Right cardiac atrium (tissue), 5 donors: ENCODE measurements at regions of chr9 and their contacts with region 1.

Region 1: GRCh38 chr9:108761655-108762347 is 94.0 kb downstream of the ACTL7B start:
- DNase-seq: peak; percentile 63 to 74 (median 68)
- ATAC-seq: peak; percentile 84 to 90
- H3K4me3 ChIP-seq: no peak overlapping the region
- H3K27ac ChIP-seq: no peak overlapping the region
- H3K4me1 ChIP-seq: no peaks in the 10 kb centered on the region
- H3K27me3 ChIP-seq: no peaks in the 10 kb centered on the region

Region 2: DNA sequence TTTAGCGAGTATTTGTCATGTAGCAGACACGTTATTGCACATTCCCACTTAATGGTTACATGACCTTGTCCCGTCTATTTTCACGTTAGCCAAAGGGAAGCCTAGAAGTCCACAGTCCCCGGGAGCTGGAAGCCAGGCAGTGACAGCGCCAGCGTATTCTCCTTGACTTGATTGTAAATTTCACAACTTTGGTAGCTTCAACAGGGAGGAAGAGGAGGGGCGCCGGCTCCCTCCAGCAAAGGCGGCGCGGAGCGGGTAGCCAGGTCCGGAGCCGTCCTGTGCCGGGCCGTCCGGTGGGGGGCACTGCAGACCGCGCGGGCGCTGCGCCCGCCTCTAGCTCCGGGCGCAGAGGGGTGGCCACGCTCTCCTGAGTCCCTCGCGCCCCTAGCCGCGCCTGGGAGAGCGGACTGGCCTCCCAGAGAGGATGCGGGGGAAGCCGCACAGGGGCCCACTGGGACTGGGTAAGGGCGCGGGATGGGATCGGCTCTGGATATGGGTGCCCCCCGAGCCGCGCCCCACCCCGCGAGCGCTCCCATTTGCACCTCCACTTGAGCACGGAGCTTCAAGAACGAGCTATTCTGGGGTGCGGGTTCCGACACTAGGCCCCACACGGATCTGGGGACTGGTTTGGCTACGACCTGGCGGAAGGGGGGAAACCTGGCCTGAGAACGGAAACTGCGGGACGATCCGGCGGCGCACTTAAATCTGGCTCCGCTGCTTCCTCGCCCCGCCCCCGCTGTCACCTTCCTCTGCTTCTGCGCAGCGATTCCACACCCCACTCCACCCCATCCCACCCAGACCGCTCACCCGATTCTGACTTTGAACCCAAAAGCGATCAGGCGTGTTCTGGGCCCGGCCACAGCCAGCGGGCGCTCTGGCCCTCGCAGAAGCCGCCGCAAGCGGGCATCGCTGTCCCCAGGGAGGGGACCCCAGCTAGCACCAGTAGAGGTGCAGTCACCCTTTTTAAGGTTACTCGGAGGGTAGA is 1296.0 kb before region 1 on chr9:
- intact Hi-C with region 1: loop called in 2 of 4 experiments (anchors 5 to 10 kb)
- DNase-seq: peak; percentile 84 to 93 (median 91)
- ATAC-seq: peak; percentile 99
- H3K4me3 ChIP-seq: peak overlapping the region; percentile 36
- H3K27ac ChIP-seq: no peak overlapping the region
- H3K4me1 ChIP-seq: peaks cover 2% of the 10 kb centered on the region
- H3K27me3 ChIP-seq: no peaks in the 10 kb centered on the region

Region 3: GRCh38 chr9:107472581-107473340 is 1289.0 kb before region 1 on chr9:
- intact Hi-C with region 1: loop called in 2 of 4 experiments (anchors 5 to 10 kb)
- DNase-seq: no peak
- ATAC-seq: no peak
- H3K4me3 ChIP-seq: no peak overlapping the region
- H3K27ac ChIP-seq: no peak overlapping the region
- H3K4me1 ChIP-seq: no peaks in the 10 kb centered on the region
- H3K27me3 ChIP-seq: no peaks in the 10 kb centered on the region

Region 4: GRCh38 chr9:108565651-108566378 is 196.0 kb before region 1 on chr9:
- intact Hi-C with region 1: loop called in 2 of 4 experiments (anchors 10 kb)
- DNase-seq: peak in 2 of 3 donors; percentile 27 to 72
- ATAC-seq: peak; percentile 92 to 95
- H3K4me3 ChIP-seq: no peak overlapping the region
- H3K27ac ChIP-seq: no peak overlapping the region
- H3K4me1 ChIP-seq: peaks cover 4% of the 10 kb centered on the region
- H3K27me3 ChIP-seq: no peaks in the 10 kb centered on the region

Region 5: GRCh38 chr9:108579757-108580439 is 181.9 kb before region 1 on chr9:
- intact Hi-C with region 1: loop called in 1 of 4 experiments (anchors 10 kb)
- DNase-seq: no peak
- ATAC-seq: no peak
- H3K4me3 ChIP-seq: no peak overlapping the region
- H3K27ac ChIP-seq: no peak overlapping the region
- H3K4me1 ChIP-seq: no peaks in the 10 kb centered on the region
- H3K27me3 ChIP-seq: no peaks in the 10 kb centered on the region

Region 6: GRCh38 chr9:108850293-108850897 is 88.6 kb after region 1 on chr9:
- intact Hi-C with region 1: no loop called
- DNase-seq: no peak
- ATAC-seq: no peak
- H3K4me3 ChIP-seq: no peak overlapping the region
- H3K27ac ChIP-seq: no peak overlapping the region
- H3K4me1 ChIP-seq: no peaks in the 10 kb centered on the region
- H3K27me3 ChIP-seq: no peaks in the 10 kb centered on the region

Region 7: DNA sequence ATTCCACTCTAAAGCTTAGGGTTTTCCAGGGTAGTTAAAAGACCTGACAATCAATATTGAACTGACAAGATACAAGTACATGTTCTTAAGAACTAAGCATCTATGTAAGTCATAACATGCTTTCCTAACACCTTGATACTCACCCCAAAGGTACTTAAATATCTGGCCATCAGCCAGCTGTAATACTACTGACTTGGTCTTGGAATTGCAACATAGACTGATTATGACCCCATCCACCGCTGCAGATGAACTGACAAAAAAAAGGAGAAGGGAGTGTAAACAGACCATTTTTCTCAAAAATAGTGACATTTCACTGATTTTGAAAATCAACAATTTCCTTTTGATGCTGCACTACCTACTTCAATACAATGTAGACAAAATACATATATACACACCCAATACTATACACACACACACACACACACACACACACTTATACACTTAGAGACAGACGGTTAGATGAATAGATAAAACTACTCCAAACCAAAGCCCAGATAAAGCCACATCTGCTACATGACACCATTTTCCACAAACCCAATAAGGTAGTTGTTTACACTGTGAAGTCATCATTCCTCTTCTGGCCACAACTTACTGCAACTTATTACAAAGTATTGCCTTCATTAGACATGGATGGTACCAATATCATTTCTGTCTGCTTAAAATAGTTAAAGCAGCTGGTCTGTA is 141.8 kb after region 1 on chr9:
- intact Hi-C with region 1: no loop called
- DNase-seq: no peak
- ATAC-seq: no peak
- H3K4me3 ChIP-seq: no peak overlapping the region
- H3K27ac ChIP-seq: no peak overlapping the region
- H3K4me1 ChIP-seq: no peaks in the 10 kb centered on the region
- H3K27me3 ChIP-seq: no peaks in the 10 kb centered on the region

Region 8: DNA sequence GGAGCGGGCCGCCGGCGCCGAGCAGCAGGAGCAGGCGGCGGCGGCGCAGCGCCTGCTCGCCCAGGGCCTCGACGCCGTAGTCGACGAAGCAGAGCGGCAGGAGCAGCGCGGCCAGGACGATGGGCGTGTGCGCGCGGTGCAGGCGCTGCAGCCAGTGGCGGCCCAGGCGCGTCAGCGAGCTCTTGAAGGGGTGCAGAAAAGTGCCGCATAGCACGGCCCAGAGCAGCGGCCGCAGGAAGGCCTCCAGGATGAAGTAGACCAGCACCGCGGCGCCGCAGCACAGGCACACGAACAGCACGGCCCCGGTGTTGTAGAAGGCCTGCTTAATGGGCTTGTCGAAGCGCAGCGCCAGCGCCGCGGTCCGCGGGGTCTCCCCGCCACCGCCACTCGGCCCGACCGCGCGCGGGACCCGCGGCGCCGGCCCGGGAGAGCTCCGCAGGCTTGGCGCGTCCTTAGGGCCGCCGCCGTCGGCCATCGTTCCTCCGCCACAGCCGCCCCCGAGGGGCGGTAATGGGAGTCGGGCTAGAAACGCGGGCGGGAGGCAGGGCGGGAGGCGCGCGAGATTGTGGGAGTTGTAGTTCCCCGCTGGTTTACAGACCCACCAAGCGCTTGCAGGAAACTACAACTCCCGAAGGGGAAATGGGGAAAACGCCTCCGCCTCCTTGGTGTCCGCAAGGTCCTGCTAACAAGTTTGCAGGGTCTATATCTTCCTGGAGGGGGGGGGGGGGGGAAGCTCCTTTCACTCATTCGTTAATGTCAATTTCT is 357.8 kb after region 1 on chr9 and contains the start of gene TMEM245:
- intact Hi-C with region 1: no loop called
- DNase-seq: peak; percentile 96 to 98 (median 98)
- ATAC-seq: peak; percentile 97 to 99
- H3K4me3 ChIP-seq: peak within 1 kb of the TSS; percentile 83
- H3K27ac ChIP-seq: peak within 1 kb of the TSS; percentile 84
- H3K4me1 ChIP-seq: peaks cover 4% of the 10 kb centered on the region
- H3K27me3 ChIP-seq: no peaks in the 10 kb centered on the region
- total RNA-seq, gene TMEM245: 81.4 to 136 (median 99.6) TPM